ENCODE measurements at regions of chr2 and their contacts with region 1.

Region 1: GRCh38 chr2:178280244-178280852 is 86.0 kb downstream of the OSBPL6 start:
- DNase-seq: peak in 1 of 2 experiments; percentile 51
- H3K4me3 ChIP-seq: no peak overlapping the region
- H3K4me3 Mint-ChIP-seq: no peak overlapping the region
- H3K27ac Mint-ChIP-seq: no peak overlapping the region
- H3K4me1 ChIP-seq: peaks cover 40% of the 10 kb centered on the region
- H3K4me1 Mint-ChIP-seq: peaks cover 22% of the 10 kb centered on the region
- H3K27me3 ChIP-seq: no peaks in the 10 kb centered on the region
- H3K27me3 Mint-ChIP-seq: no peaks in the 10 kb centered on the region
- CTCF ChIP-seq: peak; percentile 46 to 56

Region 2: DNA sequence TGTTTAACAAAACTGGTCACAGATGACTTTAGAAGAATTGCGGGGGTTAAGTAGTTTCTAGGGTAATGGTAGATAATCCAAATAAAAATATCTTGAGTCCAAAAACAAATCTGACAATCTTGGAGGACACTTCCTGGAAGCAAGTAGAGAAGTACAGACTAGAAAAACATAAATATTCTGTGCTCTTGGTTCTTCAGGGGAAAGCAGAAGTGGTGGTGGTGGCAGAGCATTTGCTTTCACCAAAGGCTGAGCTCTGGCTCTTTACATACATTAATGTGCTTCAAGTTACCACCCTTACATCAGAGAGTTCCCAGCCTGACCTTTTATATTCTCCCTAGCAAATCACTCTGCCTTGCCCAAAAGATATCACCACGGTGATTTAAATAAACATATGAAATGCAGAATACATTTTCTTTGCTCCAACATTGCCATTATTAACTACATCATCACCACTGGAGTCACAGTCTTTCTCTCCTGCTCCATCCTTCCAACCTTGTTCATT is 223.1 kb before region 1 on chr2:
- CTCF ChIA-PET with region 1: no interaction called
- POLR2A ChIA-PET with region 1: no interaction called
- intact Hi-C with region 1: no loop called
- DNase-seq: no peak
- H3K4me3 ChIP-seq: no peak overlapping the region
- H3K4me3 Mint-ChIP-seq: no peak overlapping the region
- H3K27ac Mint-ChIP-seq: no peak overlapping the region
- H3K4me1 ChIP-seq: no peaks in the 10 kb centered on the region
- H3K4me1 Mint-ChIP-seq: no peaks in the 10 kb centered on the region
- H3K27me3 ChIP-seq: no peaks in the 10 kb centered on the region
- H3K27me3 Mint-ChIP-seq: peaks cover 10% of the 10 kb centered on the region
- CTCF ChIP-seq: no peak

Region 3: GRCh38 chr2:178128836-178129630 is 151.3 kb before region 1 on chr2:
- CTCF ChIA-PET with region 1: no interaction called
- POLR2A ChIA-PET with region 1: no interaction called
- intact Hi-C with region 1: loop called (anchors 2 kb)
- DNase-seq: no peak
- H3K4me3 ChIP-seq: no peak overlapping the region
- H3K4me3 Mint-ChIP-seq: no peak overlapping the region
- H3K27ac Mint-ChIP-seq: no peak overlapping the region
- H3K4me1 ChIP-seq: 0 out of 2 replicates have a peak, but pooled peaks cover 5% of the 10 kb centered on the region
- H3K4me1 Mint-ChIP-seq: peaks cover 9% of the 10 kb centered on the region
- H3K27me3 ChIP-seq: no peaks in the 10 kb centered on the region
- H3K27me3 Mint-ChIP-seq: no peaks in the 10 kb centered on the region
- CTCF ChIP-seq: no peak

Region 4: DNA sequence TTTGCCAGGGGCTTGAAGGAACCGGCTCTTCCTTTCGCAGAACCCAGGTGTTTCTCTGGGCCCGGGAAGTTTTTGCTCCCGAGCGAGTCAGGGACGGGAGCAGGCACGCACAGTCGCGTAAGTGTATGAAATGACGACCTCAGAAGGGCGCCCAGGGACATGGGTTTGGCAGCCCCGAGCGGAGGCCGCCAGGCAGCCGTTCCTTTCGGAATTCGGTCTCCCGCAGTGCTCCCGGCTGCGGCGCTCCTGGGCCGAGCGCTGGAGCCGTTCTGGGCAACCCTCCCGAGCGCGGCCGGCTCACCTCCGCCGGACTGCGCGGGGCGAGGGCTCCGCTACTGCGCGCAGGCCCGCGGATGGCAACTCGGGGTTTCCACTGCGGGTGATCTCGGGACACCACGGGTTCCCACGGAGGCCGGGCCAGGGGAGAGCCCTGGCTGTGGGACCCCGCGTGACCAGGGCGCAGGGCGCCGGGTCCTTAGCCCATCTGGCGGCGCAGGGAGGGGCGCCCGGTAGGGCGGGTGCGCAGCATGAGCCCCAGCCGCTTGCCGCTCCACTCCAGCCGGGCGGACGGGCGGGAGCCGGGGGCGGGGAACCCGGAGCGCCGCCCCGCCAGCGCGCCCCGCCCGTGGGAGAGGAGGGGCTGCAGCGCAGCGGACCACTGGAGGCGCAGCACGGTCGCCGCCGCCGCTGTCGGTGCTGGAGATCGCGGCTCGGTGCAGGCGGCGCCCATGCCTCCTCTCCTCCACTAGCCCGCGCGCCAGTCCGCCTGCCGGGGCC is 86.3 kb before region 1 on chr2 and contains the start of gene OSBPL6:
- CTCF ChIA-PET with region 1: no interaction called
- POLR2A ChIA-PET with region 1: interaction called, 3 read pairs
- intact Hi-C with region 1: loop called (anchors 5 kb)
- DNase-seq: peak; percentile 66 to 85
- H3K4me3 ChIP-seq: peak within 1 kb of the TSS; percentile 70
- H3K4me3 Mint-ChIP-seq: peak within 1 kb of the TSS; percentile 76
- H3K27ac Mint-ChIP-seq: no peak within 1 kb of the TSS
- H3K4me1 ChIP-seq: peaks cover 10% of the 10 kb centered on the region; the same call in 1 of the 2 replicates
- H3K4me1 Mint-ChIP-seq: no peaks in the 10 kb centered on the region
- H3K27me3 ChIP-seq: peaks cover 6% of the 10 kb centered on the region
- H3K27me3 Mint-ChIP-seq: peaks cover 22% of the 10 kb centered on the region
- CTCF ChIP-seq: no peak
- total RNA-seq, gene OSBPL6: 1.0 and 1.5 TPM in 2 replicates

Region 5: DNA sequence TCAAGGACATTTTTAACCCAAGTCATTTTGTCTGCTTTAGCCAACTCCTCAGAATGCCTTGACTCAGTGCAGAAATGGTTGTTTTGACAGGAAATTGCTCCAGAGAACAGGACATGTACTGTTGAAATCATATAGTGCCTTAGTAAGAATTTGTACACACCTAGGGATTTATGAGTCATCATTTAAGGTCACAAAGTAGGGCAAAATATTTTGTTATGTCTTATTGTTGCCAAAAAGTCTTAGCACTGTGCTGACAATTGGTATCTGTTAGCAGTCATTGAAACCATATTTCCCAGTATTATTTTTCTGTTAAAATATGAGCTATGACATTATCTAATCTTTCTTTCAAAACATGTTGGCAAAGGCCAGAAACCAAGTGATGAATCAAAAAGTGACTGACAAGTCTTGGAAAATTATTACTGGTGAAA is 18.5 kb after region 1 on chr2:
- CTCF ChIA-PET with region 1: no interaction called
- POLR2A ChIA-PET with region 1: no interaction called
- intact Hi-C with region 1: loop called (anchors 2 kb)
- DNase-seq: no peak
- H3K4me3 ChIP-seq: no peak overlapping the region
- H3K4me3 Mint-ChIP-seq: no peak overlapping the region
- H3K27ac Mint-ChIP-seq: no peak overlapping the region
- H3K4me1 ChIP-seq: peaks cover 32% of the 10 kb centered on the region
- H3K4me1 Mint-ChIP-seq: peaks cover 24% of the 10 kb centered on the region
- H3K27me3 ChIP-seq: no peaks in the 10 kb centered on the region
- H3K27me3 Mint-ChIP-seq: no peaks in the 10 kb centered on the region
- CTCF ChIP-seq: no peak